ENCODE measurements at regions of chr3 and their contacts with region 1.

Region 1: DNA sequence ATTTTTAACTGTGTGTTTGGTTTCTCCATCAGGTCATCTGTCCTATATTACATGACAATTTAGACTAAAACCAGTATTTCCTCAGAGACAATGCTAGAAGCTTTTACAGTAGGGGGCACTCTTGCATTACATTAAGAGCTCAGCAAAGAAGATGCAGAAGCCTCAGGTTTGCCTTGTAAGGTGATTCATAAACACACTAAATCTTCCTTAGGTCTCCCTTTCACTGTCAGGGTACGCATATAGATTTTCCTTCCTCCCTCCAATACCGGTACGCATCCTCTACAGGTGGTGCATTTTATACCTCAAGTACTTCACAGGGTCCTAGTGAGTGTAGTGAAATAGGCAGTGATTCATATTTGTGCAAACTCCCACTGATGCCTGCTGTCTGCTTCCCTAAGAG is 46.5 kb downstream of the CD86 start:
- DNase-seq: peak; percentile 36
- ATAC-seq: peak; percentile 78
- H3K4me3 ChIP-seq: no peak overlapping the region
- H3K27ac ChIP-seq: no peak overlapping the region
- H3K4me1 ChIP-seq: no peaks in the 10 kb centered on the region
- H3K27me3 ChIP-seq: peaks cover 10% of the 10 kb centered on the region
- CTCF ChIP-seq: peak; percentile 53

Region 2: GRCh38 chr3:122123850-122124249 is 22.2 kb after region 1 on chr3:
- CTCF ChIA-PET with region 1: no interaction called
- POLR2A ChIA-PET with region 1: no interaction called
- in situ Hi-C with region 1: no loop called
- intact Hi-C with region 1: no loop called
- DNase-seq: no peak
- ATAC-seq: no peak
- H3K4me3 ChIP-seq: no peak overlapping the region
- H3K27ac ChIP-seq: no peak overlapping the region
- H3K4me1 ChIP-seq: no peaks in the 10 kb centered on the region
- H3K27me3 ChIP-seq: peaks cover 8% of the 10 kb centered on the region
- CTCF ChIP-seq: no peak

Region 3: GRCh38 chr3:122258757-122259371 is 157.2 kb after region 1 on chr3:
- CTCF ChIA-PET with region 1: no interaction called
- POLR2A ChIA-PET with region 1: no interaction called
- in situ Hi-C with region 1: no loop called
- intact Hi-C with region 1: loop called (anchors 1 kb)
- DNase-seq: peak; percentile 32
- ATAC-seq: peak; percentile 95
- H3K4me3 ChIP-seq: no peak overlapping the region
- H3K27ac ChIP-seq: no peak overlapping the region
- H3K4me1 ChIP-seq: no peaks in the 10 kb centered on the region
- H3K27me3 ChIP-seq: peaks cover 32% of the 10 kb centered on the region
- CTCF ChIP-seq: peak; percentile 84

Region 4: DNA sequence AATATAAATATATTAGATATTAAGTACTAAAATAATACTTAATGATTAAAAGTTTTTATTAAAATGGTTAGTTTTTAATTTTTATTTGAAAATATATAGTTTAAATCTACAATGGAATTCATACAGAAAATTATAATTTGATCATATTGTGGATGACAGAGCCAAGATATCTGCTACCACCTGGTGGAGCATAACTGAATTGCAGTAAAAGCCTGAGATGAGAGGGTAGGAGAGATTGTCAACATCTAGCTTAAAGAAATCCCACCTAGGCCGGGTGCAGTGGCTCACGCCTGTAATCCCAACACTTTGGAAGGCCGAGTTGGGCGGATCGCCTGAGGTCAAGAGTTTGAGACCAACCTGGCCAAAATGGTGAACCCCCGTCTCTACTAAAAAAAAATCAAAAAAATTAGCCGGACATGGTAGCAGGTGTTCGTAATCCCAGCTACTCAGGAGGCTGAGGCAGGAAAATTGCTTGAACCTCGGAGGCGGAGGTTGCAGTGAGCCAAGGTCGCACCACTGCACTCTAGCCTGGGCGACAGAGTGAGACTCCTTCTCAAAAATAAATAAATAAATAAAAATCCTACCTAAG is 198.3 kb after region 1 on chr3:
- CTCF ChIA-PET with region 1: interaction called, 4 read pairs
- POLR2A ChIA-PET with region 1: no interaction called
- in situ Hi-C with region 1: no loop called
- intact Hi-C with region 1: loop called (anchors 2 kb)
- DNase-seq: peak; percentile 5
- ATAC-seq: peak; percentile 71; the same call in 1 of the 2 replicates
- H3K4me3 ChIP-seq: no peak overlapping the region
- H3K27ac ChIP-seq: no peak overlapping the region
- H3K4me1 ChIP-seq: no peaks in the 10 kb centered on the region
- H3K27me3 ChIP-seq: no peaks in the 10 kb centered on the region
- CTCF ChIP-seq: peak; percentile 84